H1 (cell line): ENCODE measurements at regions of chr9 and their contacts with region 1.

Region 1: DNA sequence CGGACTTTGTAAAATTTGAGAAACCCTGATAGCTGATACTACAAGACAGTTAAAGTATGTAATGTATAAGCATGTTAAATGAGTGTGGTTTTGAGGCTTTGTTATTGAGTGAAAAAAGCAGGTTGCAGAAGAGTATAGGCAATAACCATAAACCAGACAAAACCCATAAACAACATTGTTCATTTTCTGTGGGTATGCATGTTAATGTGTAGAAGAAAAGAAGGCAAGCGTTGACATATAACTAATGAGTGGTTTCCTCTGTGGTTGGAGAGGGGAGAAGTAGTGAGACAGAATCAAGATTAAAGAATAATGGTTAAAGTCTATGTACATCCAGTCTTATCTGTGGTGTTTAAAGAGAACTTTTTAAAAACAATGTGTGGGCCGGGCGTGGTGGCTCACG is 26.2 kb downstream of the RAD23B start:
- DNase-seq: no peak
- H3K4me3 ChIP-seq: no peak overlapping the region
- H3K27ac ChIP-seq: no peak overlapping the region
- H3K4me1 ChIP-seq: no peaks in the 10 kb centered on the region
- H3K27me3 ChIP-seq: no peaks in the 10 kb centered on the region
- CTCF ChIP-seq: no peak
- EP300 ChIP-seq: no peak
- POLR2A ChIP-seq: no peak
- RAD21 ChIP-seq: no peak

Region 2: DNA sequence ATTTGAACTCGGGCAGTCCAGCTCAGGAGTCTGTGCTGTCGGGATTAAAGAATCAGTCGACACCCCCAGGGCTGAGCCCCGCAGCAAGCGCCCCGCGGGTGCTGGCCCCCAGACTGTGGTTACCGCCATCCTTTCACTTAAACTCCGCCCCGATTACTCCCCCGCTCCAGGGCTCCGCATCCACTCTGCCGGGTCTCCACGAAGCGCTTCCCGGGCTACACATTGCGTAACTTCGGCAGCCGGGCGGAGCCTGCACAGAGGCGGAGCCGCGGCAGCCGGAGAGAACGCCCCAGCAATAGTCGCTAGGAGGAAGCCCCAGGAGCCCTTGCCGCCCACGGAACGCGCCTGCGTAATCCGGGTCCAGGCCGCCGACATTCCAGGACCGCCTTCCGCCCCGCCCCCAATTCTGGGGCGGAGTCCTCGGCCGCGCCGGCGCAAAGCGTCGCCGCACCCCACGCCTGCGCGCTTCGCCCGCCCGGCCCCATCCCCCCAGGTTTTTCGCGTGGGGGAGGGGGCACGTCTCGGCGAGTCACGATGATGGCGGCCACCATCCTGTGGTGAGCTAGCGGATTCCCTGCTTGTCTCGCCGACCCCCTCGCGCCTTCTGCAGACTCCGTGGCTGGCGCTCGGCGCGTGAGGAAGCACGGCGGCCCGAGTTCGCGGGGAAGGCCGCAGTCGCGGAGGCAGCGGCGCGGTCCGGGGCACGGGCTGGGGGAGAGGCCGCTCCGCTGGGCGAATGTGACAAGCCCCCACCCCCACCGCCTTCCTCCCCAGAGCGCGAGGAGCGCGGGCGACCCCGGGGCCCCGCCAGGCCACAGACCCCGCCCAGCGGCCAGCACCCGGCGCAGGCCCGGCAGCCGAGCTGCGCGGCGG is 26.3 kb before region 1 on chr9 and contains the start of gene RAD23B:
- CTCF ChIA-PET with region 1: interaction called, 3 read pairs
- POLR2A ChIA-PET with region 1: interaction called, 10 read pairs
- DNase-seq: peak; percentile 95 to 97
- H3K4me3 ChIP-seq: peak within 1 kb of the TSS; percentile 75 to 87 (median 82)
- H3K27ac ChIP-seq: peak within 1 kb of the TSS; percentile 97
- H3K4me1 ChIP-seq: peaks cover 0 to 7% (median 1%) of the 10 kb centered on the region in 4 experiments; a peak in 3 of 7 replicates
- H3K27me3 ChIP-seq: no peaks in the 10 kb centered on the region
- CTCF ChIP-seq: no peak
- EP300 ChIP-seq: no peak
- POLR2A ChIP-seq: peak; percentile 46 to 80
- RAD21 ChIP-seq: no peak
- total RNA-seq, gene RAD23B: 162 and 165 TPM in 2 replicates

Region 3: GRCh38 chr9:107438211-107439090 is 129.2 kb after region 1 on chr9:
- CTCF ChIA-PET with region 1: no interaction called
- POLR2A ChIA-PET with region 1: no interaction called
- DNase-seq: peak; percentile 61 to 65
- H3K4me3 ChIP-seq: peak overlapping the region in 2 of 4 experiments; percentile 7 to 28; a peak in 1 of 8 replicates
- H3K27ac ChIP-seq: peak overlapping the region; percentile 87
- H3K4me1 ChIP-seq: peaks cover 6 to 8% (median 7%) of the 10 kb centered on the region in 4 experiments; a peak in 4 of 7 replicates
- H3K27me3 ChIP-seq: no peaks in the 10 kb centered on the region
- CTCF ChIP-seq: no peak
- EP300 ChIP-seq: peak in 1 of 2 experiments; percentile 91; a peak in 1 of 3 replicates
- POLR2A ChIP-seq: peak; percentile 48 to 65; a peak in 2 of 3 replicates
- RAD21 ChIP-seq: no peak